AG04450 (cell line): ENCODE measurements at regions of chr5 and their contacts with region 1.

Region 1: GRCh38 chr5:141636413-141637122 is at the starts of genes HDAC3 and RELL2:
- DNase-seq: peak; percentile 57
- H3K4me3 ChIP-seq: peak within 1 kb of the TSS; percentile 77
- H3K27ac ChIP-seq: no peak within 1 kb of the TSS
- H3K27me3 ChIP-seq: no peaks in the 10 kb centered on the region
- CTCF ChIP-seq: no peak
- polyA plus RNA-seq, gene HDAC3: 78.3 and 82.2 TPM in 2 replicates
- polyA plus RNA-seq, gene RELL2: 3.0 and 3.1 TPM in 2 replicates

Region 2: DNA sequence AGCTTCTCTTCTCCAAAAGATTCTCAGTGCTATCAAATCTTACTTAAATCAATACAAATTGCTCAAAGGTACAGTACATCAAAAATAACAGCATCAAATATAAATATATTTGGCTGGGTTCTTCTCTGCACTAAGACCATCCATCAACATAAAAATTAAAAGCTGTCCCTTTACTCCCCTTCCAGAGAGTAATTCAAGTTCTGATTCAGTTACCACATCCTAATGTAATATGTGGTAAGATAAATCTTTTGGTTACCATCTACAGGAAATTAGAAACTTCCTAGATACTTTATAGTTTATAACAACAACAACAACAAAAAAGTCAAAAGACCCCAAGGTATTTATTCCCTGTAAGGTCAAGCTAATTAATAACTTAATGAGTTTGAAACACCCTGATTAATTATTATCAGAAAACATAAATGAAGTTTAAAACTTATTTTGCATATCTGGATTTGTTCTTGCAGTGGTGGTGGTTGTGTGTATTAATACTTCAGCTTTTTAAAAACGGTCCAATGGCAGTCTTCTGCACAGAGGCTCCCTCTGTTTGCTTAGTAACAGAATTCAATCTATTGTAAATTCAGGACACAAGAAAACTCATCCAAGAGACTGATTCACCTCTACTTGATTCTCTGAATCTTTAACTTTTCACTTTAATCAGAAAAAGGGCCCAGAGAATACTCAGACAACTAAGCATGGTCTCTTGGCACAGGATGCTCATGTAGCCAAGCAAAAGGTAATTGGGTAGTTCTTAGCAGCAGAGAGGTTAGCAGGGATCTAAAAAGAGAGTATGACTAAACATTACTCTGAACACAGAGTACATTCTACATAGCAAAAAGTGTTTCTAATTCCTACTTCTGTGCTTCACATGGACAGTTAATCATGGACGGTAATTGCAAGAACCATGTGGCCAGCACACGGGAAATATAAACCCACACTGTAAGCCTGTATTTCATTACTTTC is 37.9 kb before region 1 on chr5:
- CTCF ChIA-PET with region 1: interaction called, 52 read pairs
- POLR2A ChIA-PET with region 1: interaction called, 3 read pairs
- DNase-seq: no peak
- H3K4me3 ChIP-seq: no peak overlapping the region
- H3K27ac ChIP-seq: no peak overlapping the region
- H3K27me3 ChIP-seq: no peaks in the 10 kb centered on the region
- CTCF ChIP-seq: no peak

Region 3: GRCh38 chr5:141650851-141651727 is 14.5 kb after region 1 on chr5 and contains the start of gene FCHSD1:
- CTCF ChIA-PET with region 1: interaction called, 5 read pairs
- POLR2A ChIA-PET with region 1: interaction called, 14 read pairs
- DNase-seq: peak; percentile 50
- H3K4me3 ChIP-seq: peak within 1 kb of the TSS; percentile 85
- H3K27ac ChIP-seq: no peak within 1 kb of the TSS
- H3K27me3 ChIP-seq: no peaks in the 10 kb centered on the region
- CTCF ChIP-seq: no peak
- polyA plus RNA-seq, gene FCHSD1: 28.1 and 30.2 TPM in 2 replicates

Region 4: GRCh38 chr5:141793881-141794280 is 157.3 kb after region 1 on chr5:
- CTCF ChIA-PET with region 1: no interaction called
- POLR2A ChIA-PET with region 1: no interaction called
- DNase-seq: no peak
- H3K4me3 ChIP-seq: no peak overlapping the region
- H3K27ac ChIP-seq: no peak overlapping the region
- H3K27me3 ChIP-seq: peaks cover 40% of the 10 kb centered on the region
- CTCF ChIP-seq: no peak